ENCODE measurements at regions of chr1 and their contacts with region 1.

Region 1: DNA sequence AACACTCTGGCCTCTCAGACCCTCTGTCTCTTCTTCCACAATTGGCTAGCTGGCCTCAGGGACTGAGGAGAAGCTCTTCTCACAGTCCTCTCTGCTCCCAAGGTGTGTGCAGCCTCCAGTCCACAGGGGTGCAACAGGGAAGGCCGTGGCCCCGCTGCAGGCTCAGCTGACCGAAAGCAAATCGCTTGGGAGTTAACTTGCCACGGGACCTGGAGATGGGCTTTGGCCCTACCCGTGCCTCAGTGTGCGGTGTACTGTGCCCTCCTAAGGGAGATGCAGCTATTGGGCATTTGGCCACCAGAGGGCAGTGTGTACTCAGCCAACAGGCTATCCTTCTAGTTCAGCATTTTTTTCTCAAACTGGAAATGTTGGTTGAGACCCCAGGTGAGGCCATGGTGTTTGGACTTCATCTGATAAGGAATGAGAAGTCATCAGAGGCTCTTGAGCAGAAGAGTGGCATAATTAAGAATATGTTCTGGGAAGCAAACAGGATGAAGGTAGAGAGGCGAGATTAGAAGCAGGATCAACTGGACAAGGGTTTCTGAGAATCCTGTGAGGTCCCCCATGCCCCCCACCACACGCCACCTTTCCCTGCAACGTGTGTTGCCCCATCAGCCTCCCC is 42.5 kb upstream of the TMEM125 start:
- DNase-seq: peak; percentile 72 to 92 (median 81)
- H3K4me3 ChIP-seq: no peak overlapping the region
- H3K27ac ChIP-seq: no peak overlapping the region
- H3K4me1 ChIP-seq: peaks cover 0 to 5% of the 10 kb centered on the region in 2 donors
- H3K27me3 ChIP-seq: no peaks in the 10 kb centered on the region
- CTCF ChIP-seq: peak; percentile 86 to 95 (median 90)
- POLR2A ChIP-seq: no peak

Region 2: DNA sequence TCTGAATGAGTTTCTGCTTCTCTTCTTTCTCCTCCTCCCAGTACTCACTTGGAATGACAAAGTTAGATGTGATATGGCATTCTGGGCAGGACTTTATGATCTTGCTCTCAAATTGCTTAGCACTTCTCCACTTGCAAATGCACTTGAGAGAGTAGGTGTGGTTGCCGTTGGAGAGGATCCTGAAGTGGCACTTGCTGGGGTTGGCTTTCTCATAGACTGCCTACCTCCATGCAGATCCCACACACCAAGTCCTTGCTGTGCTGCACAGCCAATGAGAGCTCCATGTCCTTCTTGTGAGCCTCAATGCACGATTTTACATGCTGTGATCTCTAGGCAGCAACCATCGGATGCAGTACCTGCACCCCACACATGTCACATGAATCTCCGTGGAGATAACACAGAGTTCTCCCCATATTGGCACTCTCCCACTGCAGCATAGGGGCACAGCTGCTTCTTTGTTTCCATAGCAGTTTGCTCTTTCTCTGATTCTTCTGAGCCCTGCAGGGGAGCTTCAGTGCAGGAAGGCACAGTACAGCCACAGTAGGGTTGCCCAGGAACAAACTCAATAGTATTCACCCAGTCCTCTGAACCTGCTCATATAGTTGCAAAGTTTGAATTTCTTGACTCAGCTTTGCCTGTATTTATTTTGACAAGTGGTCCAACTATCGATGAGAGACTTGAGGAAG is 335.6 kb before region 1 on chr1:
- intact Hi-C with region 1: no loop called
- DNase-seq: no peak
- H3K4me3 ChIP-seq: no peak overlapping the region
- H3K27ac ChIP-seq: no peak overlapping the region
- H3K4me1 ChIP-seq: no peaks in the 10 kb centered on the region
- H3K27me3 ChIP-seq: no peaks in the 10 kb centered on the region
- CTCF ChIP-seq: no peak
- POLR2A ChIP-seq: no peak

Region 3: GRCh38 chr1:43414634-43415223 is 187.5 kb after region 1 on chr1:
- intact Hi-C with region 1: loop called (anchors 5 kb)
- DNase-seq: peak; percentile 49 to 78 (median 58)
- H3K4me3 ChIP-seq: no peak overlapping the region
- H3K27ac ChIP-seq: no peak overlapping the region
- H3K4me1 ChIP-seq: no peaks in the 10 kb centered on the region
- H3K27me3 ChIP-seq: no peaks in the 10 kb centered on the region
- CTCF ChIP-seq: peak; percentile 25 to 67 (median 64)
- POLR2A ChIP-seq: no peak